ENCODE measurements at regions of chr1 and their contacts with region 1.

Region 1: DNA sequence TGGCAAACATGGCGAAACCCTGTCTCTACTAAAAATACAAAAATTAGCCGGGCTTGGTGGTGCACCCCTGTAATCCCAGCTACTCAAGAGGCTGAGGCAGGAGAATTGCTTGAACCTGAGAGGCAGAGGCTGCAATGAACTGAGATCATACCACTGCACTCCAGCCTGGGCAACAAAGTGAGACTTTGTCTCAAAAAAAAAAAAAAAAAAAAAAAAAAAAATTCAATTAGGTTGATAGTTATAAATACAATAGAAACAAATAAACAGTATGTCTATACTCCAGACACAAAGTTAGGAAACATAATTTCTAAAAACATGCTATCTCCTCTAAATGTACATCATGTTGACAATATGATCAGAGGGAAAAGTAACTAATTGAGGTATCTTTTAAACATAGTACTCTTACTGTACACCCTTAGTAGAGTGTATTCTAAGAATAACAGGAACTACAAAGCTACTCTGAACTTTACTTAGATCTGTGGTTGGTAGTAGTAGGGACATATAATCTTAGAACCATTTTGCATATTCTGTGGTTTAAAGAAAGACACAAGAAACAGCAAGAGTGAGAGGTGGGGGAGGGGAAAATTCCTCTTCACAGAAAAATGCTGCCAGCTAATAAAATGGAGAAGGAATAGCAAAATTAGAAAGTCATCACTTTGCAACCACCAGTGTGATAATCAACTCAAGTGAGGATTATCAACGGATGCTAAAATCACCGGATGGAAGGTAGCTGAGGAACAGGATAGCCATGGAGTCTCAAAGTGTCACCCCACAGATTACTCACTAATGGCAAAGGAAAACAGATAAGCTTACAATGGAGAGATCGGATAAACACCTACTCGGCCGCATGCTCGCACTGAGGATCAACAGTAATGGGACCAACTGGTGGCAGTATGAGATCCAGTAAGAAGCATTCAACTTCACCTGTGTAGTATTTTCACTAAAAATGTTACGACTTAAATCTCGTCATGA is 35.0 kb downstream of the MTOR start:
- H3K4me3 ChIP-seq: no peak overlapping the region
- H3K27ac ChIP-seq: no peak overlapping the region
- H3K4me1 ChIP-seq: no peaks in the 10 kb centered on the region
- CTCF ChIP-seq: no peak

Region 2: DNA sequence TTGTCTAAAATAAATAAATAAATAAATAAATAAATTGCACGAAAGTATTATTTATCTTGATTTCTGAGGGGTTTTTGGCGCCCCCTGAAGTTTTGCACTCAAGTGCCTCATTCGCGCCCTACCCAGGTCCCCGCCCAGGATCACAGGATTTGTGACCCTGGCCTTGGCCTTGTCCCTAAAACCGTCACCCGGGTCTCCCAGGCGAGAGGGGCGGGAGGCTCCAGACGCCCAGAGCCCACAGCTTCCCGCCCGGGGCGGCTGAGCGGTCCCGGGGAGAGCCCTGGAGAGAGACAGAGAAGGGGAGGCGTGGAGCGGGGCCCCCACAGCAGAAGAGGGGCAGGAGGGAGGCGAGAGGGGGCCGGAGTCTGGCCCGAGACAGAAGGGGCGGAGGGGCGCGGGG is 339.1 kb before region 1 on chr1:
- CTCF ChIA-PET with region 1: no interaction called
- POLR2A ChIA-PET with region 1: no interaction called
- H3K4me3 ChIP-seq: no peak overlapping the region
- H3K27ac ChIP-seq: no peak overlapping the region
- H3K4me1 ChIP-seq: no peaks in the 10 kb centered on the region
- CTCF ChIP-seq: no peak

Region 3: GRCh38 chr1:11248155-11248554 is 20.8 kb after region 1 on chr1:
- CTCF ChIA-PET with region 1: interaction called, 11 read pairs
- POLR2A ChIA-PET with region 1: no interaction called
- H3K4me3 ChIP-seq: no peak overlapping the region
- H3K27ac ChIP-seq: no peak overlapping the region
- H3K4me1 ChIP-seq: no peaks in the 10 kb centered on the region
- CTCF ChIP-seq: no peak

Region 4: GRCh38 chr1:11337580-11338073 is 110.2 kb after region 1 on chr1:
- CTCF ChIA-PET with region 1: no interaction called
- POLR2A ChIA-PET with region 1: no interaction called
- H3K4me3 ChIP-seq: no peak overlapping the region
- H3K27ac ChIP-seq: no peak overlapping the region
- H3K4me1 ChIP-seq: no peaks in the 10 kb centered on the region
- CTCF ChIP-seq: peak; percentile 72